IMR-90 (cell line): ENCODE measurements at regions of chr9 and their contacts with region 1.

Region 1: GRCh38 chr9:112717661-112718341 is at the start of gene INIP:
- DNase-seq: peak; percentile 95
- ATAC-seq: peak; percentile 99
- H3K4me3 ChIP-seq: peak within 1 kb of the TSS; percentile 88
- H3K27ac ChIP-seq: peak within 1 kb of the TSS; percentile 54
- H3K4me1 ChIP-seq: no peaks in the 10 kb centered on the region
- H3K27me3 ChIP-seq: no peaks in the 10 kb centered on the region
- CTCF ChIP-seq: 0 out of 2 replicates have a peak, but pooled peaks have one; percentile 16
- POLR2A ChIP-seq: peak; percentile 47; the same call in 1 of the 2 replicates
- RAD21 ChIP-seq: 0 out of 2 replicates have a peak, but pooled peaks have one; percentile 24
- total RNA-seq, gene INIP: 15.4 and 23.3 TPM in 2 replicates

Region 2: DNA sequence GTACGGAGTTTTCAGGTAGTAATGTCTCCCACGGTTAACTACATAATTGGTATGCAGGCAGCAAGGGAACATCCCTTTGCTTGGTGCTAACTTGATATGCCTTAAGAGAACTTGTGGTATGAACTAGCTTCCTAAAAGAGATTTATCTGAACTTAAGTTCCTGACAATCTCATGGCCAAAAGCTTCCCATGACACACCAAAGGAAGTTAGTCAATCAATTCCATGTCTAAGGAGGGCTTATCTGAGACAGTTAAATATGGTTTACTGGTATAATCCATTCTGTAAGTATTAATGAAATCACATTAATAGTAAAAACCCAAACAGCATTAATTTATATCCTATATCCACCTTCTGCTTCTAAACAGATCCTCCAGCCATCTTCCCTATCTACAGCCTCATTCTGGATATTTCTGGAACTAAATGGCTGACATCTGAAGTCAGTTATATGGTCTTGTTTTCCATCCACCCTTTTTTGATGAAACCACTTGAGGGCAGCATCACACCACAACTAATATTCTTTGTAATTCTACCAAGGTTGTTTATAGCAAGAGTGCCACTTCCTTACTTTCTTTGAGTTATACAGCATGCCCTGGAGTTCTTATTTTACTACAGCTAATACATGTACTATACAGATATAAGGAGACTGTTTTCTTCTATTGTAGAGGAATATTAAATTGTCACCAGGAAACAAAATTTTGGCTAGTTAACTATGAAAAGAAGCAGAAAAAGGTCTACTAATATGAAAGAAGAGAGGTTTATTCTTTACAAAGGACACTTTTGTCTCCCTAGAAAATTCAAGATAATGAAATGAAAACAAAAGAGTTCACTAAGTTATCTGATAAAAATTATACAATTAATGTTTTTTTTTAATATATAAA is 957.8 kb before region 1 on chr9:
- CTCF ChIA-PET with region 1: no interaction called
- POLR2A ChIA-PET with region 1: no interaction called
- dilution Hi-C with region 1: no loop called
- in situ Hi-C with region 1: loop called (anchors 25 kb)
- intact Hi-C with region 1: no loop called
- DNase-seq: peak; percentile 91
- ATAC-seq: peak; percentile 95
- H3K4me3 ChIP-seq: no peak overlapping the region
- H3K27ac ChIP-seq: peak overlapping the region; percentile 24; the same call in 1 of the 2 replicates
- H3K4me1 ChIP-seq: peaks cover 3% of the 10 kb centered on the region; the same call in 1 of the 2 replicates
- H3K27me3 ChIP-seq: no peaks in the 10 kb centered on the region
- CTCF ChIP-seq: peak; percentile 83
- POLR2A ChIP-seq: no peak
- RAD21 ChIP-seq: peak; percentile 90

Region 3: GRCh38 chr9:112097712-112098688 is 619.8 kb before region 1 on chr9:
- CTCF ChIA-PET with region 1: no interaction called
- POLR2A ChIA-PET with region 1: no interaction called
- dilution Hi-C with region 1: no loop called
- in situ Hi-C with region 1: loop called (anchors 25 kb)
- intact Hi-C with region 1: loop called (anchors 5 kb)
- DNase-seq: peak; percentile 77
- ATAC-seq: peak; percentile 95
- H3K4me3 ChIP-seq: no peak overlapping the region
- H3K27ac ChIP-seq: no peak overlapping the region
- H3K4me1 ChIP-seq: no peaks in the 10 kb centered on the region
- H3K27me3 ChIP-seq: no peaks in the 10 kb centered on the region
- CTCF ChIP-seq: peak; percentile 93
- POLR2A ChIP-seq: peak; percentile 31; the same call in 1 of the 2 replicates
- RAD21 ChIP-seq: peak; percentile 93

Region 4: DNA sequence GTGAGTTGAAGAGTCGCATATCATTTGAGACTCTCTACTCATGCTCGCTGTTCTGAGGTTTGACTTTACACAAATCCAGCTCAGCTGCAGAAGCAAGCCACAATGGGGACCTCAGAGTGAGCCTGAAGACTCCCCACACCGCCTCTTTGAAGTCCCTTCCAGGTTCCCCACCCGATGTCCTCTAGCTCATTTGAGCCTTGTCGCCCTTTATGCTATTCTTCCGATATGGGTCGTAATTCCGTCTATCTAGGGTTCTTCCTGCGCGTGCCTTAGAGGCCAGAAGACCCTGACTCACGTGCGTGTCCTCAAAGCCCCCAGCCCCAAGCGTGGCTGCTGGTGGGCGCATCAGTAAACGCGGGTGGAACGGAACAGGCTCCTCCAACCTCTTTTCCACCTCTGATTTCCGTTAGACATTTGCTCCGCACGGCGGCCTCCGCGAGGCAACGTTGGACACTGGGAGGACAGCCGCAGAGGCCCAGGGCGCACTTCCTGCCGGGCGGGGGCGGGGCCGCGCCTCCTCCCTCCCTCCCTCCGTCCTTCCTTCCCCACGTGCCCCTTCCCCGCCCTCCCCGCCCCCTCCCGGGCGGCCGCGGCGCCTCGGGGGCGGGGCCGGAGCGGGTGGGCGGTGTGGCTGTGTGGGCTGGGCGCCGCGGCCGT is 32.4 kb after region 1 on chr9 and contains the start of gene SNX30:
- CTCF ChIA-PET with region 1: interaction called, 3 read pairs
- POLR2A ChIA-PET with region 1: no interaction called
- dilution Hi-C with region 1: no loop called
- in situ Hi-C with region 1: no loop called
- intact Hi-C with region 1: loop called (anchors 5 kb)
- DNase-seq: peak; percentile 85
- ATAC-seq: peak; percentile 87
- H3K4me3 ChIP-seq: peak within 1 kb of the TSS; percentile 89
- H3K27ac ChIP-seq: peak within 1 kb of the TSS; percentile 73
- H3K4me1 ChIP-seq: peaks cover 21% of the 10 kb centered on the region
- H3K27me3 ChIP-seq: no peaks in the 10 kb centered on the region
- CTCF ChIP-seq: no peak; the same call in 1 of the 2 replicates
- POLR2A ChIP-seq: peak; percentile 75
- RAD21 ChIP-seq: peak; percentile 41
- total RNA-seq, gene SNX30: 18.8 and 23.6 TPM in 2 replicates

Region 5: GRCh38 chr9:112793213-112793810 is 75.5 kb after region 1 on chr9:
- CTCF ChIA-PET with region 1: interaction called, 7 read pairs
- POLR2A ChIA-PET with region 1: no interaction called
- dilution Hi-C with region 1: no loop called
- in situ Hi-C with region 1: no loop called
- intact Hi-C with region 1: loop called (anchors 5 kb)
- DNase-seq: peak; percentile 56
- ATAC-seq: peak; percentile 76
- H3K4me3 ChIP-seq: no peak overlapping the region
- H3K27ac ChIP-seq: no peak overlapping the region
- H3K4me1 ChIP-seq: peaks cover 13% of the 10 kb centered on the region
- H3K27me3 ChIP-seq: no peaks in the 10 kb centered on the region
- CTCF ChIP-seq: peak; percentile 70
- POLR2A ChIP-seq: no peak
- RAD21 ChIP-seq: peak; percentile 83

Region 6: DNA sequence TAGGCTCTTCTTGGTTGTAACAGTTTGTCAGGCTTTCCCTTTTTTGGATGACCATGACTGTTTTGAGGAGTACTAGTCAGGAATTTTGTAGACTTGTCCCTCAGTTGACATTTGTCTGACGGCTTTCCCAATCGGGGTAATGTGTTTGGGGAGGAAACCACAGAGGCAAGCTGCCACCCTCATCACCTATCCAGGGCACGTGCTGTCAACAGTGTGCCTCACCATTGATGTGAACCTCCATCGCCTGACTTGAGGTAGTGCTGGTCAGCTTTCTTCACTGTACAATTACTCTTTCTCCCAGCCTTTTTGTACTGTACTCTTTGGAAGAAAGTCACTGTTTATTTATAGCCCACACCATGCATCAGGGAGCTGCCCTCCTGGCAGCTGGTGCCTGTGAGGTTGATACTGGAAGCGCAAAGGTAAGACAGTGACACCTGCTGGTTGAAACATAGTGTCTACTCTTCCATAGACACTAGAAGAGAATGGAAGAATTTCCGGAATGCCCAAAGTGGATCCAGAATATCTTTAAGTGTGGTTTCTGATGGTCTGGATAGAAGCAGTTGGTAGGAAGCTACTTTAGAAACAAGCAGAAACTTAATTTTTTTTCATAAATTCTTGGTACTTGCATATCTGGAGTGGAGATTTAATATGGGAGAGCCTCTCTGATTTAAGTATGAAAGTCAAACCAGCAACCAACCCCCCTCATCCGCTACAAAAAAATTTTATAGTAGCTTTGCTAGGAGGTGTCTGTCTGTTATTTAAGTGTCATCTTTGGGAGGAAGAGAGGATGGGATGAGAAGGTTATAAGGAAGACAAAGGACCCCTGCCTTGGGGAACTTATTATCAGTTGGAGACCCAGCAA is 102.1 kb after region 1 on chr9:
- CTCF ChIA-PET with region 1: interaction called, 5 read pairs
- POLR2A ChIA-PET with region 1: no interaction called
- dilution Hi-C with region 1: no loop called
- in situ Hi-C with region 1: no loop called
- intact Hi-C with region 1: loop called (anchors 2 kb)
- DNase-seq: peak; percentile 85
- ATAC-seq: peak; percentile 96
- H3K4me3 ChIP-seq: no peak overlapping the region
- H3K27ac ChIP-seq: no peak overlapping the region
- H3K4me1 ChIP-seq: peaks cover 2% of the 10 kb centered on the region; the same call in 1 of the 2 replicates
- H3K27me3 ChIP-seq: no peaks in the 10 kb centered on the region
- CTCF ChIP-seq: peak; percentile 68
- POLR2A ChIP-seq: no peak
- RAD21 ChIP-seq: peak; percentile 82

Region 7: DNA sequence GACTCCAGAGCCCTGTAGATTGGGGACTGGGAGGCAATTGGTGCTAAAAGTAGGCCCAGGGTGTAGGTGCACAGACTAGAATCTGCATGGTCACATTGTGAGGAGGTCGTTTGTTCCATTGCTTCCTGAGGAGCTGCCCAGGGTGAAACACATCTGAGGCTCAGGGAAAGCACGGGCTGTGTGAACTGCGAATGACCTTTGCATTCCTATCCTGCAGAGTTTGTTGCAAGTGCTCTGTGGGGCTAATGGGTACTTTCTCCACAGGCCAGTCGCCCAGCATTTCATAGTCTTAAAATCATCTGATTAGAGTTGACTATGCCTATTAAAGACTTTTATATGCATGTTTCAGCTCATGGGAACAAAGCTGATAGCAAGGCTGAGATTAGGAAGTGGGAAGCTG is 187.3 kb after region 1 on chr9:
- CTCF ChIA-PET with region 1: interaction called, 5 read pairs
- POLR2A ChIA-PET with region 1: no interaction called
- dilution Hi-C with region 1: no loop called
- in situ Hi-C with region 1: no loop called
- intact Hi-C with region 1: loop called (anchors 10 kb)
- DNase-seq: no peak
- ATAC-seq: no peak
- H3K4me3 ChIP-seq: no peak overlapping the region
- H3K27ac ChIP-seq: no peak overlapping the region
- H3K4me1 ChIP-seq: no peaks in the 10 kb centered on the region
- H3K27me3 ChIP-seq: peaks cover 27% of the 10 kb centered on the region
- CTCF ChIP-seq: no peak
- POLR2A ChIP-seq: no peak
- RAD21 ChIP-seq: no peak